ENCODE measurements at regions of chr11 and their contacts with region 1.

Region 1: DNA sequence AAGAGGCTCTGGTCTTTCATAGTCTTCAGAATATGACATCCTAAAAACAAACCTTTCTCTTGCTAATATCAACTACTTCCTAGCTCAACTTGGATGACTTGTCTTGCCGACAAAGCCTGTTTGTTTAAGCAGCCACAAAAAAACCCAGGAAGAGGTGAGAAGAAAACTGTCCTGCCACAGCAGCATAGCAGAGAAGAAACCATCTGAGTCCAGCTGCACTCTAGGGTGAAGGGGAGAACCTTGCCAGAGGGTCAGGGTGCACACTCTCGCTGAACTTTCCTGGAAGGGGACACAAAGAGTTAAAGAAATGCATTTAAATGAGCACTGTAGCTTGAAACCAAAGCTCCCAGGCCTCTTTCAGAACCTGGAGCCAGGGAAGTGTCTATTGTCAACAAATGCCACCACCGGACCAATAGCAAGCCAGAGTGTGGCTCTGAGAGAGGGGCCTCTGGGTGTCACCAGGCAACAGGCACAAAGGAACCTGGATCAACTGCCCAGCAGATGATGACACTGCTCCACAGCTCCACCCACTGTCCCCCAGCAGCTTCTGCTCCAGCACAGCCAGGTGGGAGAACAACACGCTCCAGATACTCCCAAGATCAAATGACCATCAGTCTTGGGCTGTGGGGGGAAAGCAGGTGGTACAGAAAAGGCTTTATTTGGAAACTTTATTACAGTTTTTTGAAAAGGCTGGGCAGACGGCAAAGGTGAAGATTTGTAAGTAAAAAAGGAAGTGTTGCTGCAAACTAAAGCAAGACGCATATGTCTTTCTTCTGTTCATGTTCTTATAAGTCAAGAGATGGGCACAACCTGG is 105.7 kb downstream of the RASSF10 start:
- DNase-seq: no peak
- ATAC-seq: peak; percentile 43
- H3K4me3 ChIP-seq: no peak overlapping the region
- H3K27ac ChIP-seq: no peak overlapping the region
- H3K4me1 ChIP-seq: no peaks in the 10 kb centered on the region
- H3K27me3 ChIP-seq: no peaks in the 10 kb centered on the region
- CTCF ChIP-seq: peak in 2 of 3 experiments; percentile 14 to 45; a peak in 2 of 6 replicates
- EP300 ChIP-seq: no peak
- POLR2A ChIP-seq: no peak
- RAD21 ChIP-seq: no peak

Region 2: GRCh38 chr11:13009921-13010748 is 104.6 kb before region 1 on chr11:
- CTCF ChIA-PET with region 1: interaction called, 5 read pairs
- POLR2A ChIA-PET with region 1: interaction called, 3 read pairs
- RAD21 ChIA-PET with region 1: interaction called, 5 read pairs
- SMC1A ChIA-PET with region 1: interaction called, 5 read pairs
- in situ Hi-C with region 1: no loop called
- intact Hi-C with region 1: loop called (anchors 1 kb)
- DNase-seq: no peak
- ATAC-seq: no peak
- H3K4me3 ChIP-seq: no peak overlapping the region
- H3K27ac ChIP-seq: no peak overlapping the region
- H3K4me1 ChIP-seq: no peaks in the 10 kb centered on the region
- H3K27me3 ChIP-seq: peaks cover 0 to 4% of the 10 kb centered on the region in 2 experiments; a peak in 3 of 4 replicates
- CTCF ChIP-seq: no peak; a peak in 1 of 6 replicates
- EP300 ChIP-seq: no peak
- POLR2A ChIP-seq: no peak
- RAD21 ChIP-seq: no peak

Region 3: GRCh38 chr11:13052130-13052605 is 62.6 kb before region 1 on chr11:
- CTCF ChIA-PET with region 1: interaction called, 4 read pairs
- POLR2A ChIA-PET with region 1: no interaction called
- RAD21 ChIA-PET with region 1: interaction called, 4 read pairs
- SMC1A ChIA-PET with region 1: interaction called, 6 read pairs
- in situ Hi-C with region 1: no loop called
- intact Hi-C with region 1: loop called (anchors 5 kb)
- DNase-seq: no peak
- ATAC-seq: peak; percentile 43
- H3K4me3 ChIP-seq: no peak overlapping the region
- H3K27ac ChIP-seq: no peak overlapping the region
- H3K4me1 ChIP-seq: no peaks in the 10 kb centered on the region
- H3K27me3 ChIP-seq: no peaks in the 10 kb centered on the region
- CTCF ChIP-seq: no peak
- EP300 ChIP-seq: no peak
- POLR2A ChIP-seq: no peak
- RAD21 ChIP-seq: no peak

Region 4: GRCh38 chr11:13127161-13127560 is 12.4 kb after region 1 on chr11:
- CTCF ChIA-PET with region 1: interaction called, 3 read pairs
- POLR2A ChIA-PET with region 1: no interaction called
- RAD21 ChIA-PET with region 1: no interaction called
- SMC1A ChIA-PET with region 1: interaction called, 10 read pairs
- in situ Hi-C with region 1: no loop called
- intact Hi-C with region 1: no loop called
- DNase-seq: no peak
- ATAC-seq: no peak
- H3K4me3 ChIP-seq: no peak overlapping the region
- H3K27ac ChIP-seq: no peak overlapping the region
- H3K4me1 ChIP-seq: no peaks in the 10 kb centered on the region
- H3K27me3 ChIP-seq: no peaks in the 10 kb centered on the region
- CTCF ChIP-seq: no peak
- EP300 ChIP-seq: no peak
- POLR2A ChIP-seq: no peak
- RAD21 ChIP-seq: no peak

Region 5: GRCh38 chr11:13134886-13135285 is 20.1 kb after region 1 on chr11:
- CTCF ChIA-PET with region 1: interaction called, 8 read pairs
- POLR2A ChIA-PET with region 1: interaction called, 3 read pairs
- RAD21 ChIA-PET with region 1: interaction called, 6 read pairs
- SMC1A ChIA-PET with region 1: interaction called, 21 read pairs
- in situ Hi-C with region 1: no loop called
- intact Hi-C with region 1: no loop called
- DNase-seq: no peak
- ATAC-seq: peak; percentile 53
- H3K4me3 ChIP-seq: no peak overlapping the region
- H3K27ac ChIP-seq: no peak overlapping the region
- H3K4me1 ChIP-seq: no peaks in the 10 kb centered on the region
- H3K27me3 ChIP-seq: no peaks in the 10 kb centered on the region; a peak in 1 of 4 replicates
- CTCF ChIP-seq: no peak
- EP300 ChIP-seq: no peak
- POLR2A ChIP-seq: no peak
- RAD21 ChIP-seq: no peak

Region 6: GRCh38 chr11:13140028-13140870 is 25.5 kb after region 1 on chr11:
- CTCF ChIA-PET with region 1: interaction called, 8 read pairs
- POLR2A ChIA-PET with region 1: interaction called, 3 read pairs
- RAD21 ChIA-PET with region 1: interaction called, 6 read pairs
- SMC1A ChIA-PET with region 1: interaction called, 21 read pairs
- in situ Hi-C with region 1: no loop called
- intact Hi-C with region 1: no loop called
- DNase-seq: peak; percentile 57
- ATAC-seq: peak; percentile 85
- H3K4me3 ChIP-seq: no peak overlapping the region
- H3K27ac ChIP-seq: no peak overlapping the region
- H3K4me1 ChIP-seq: no peaks in the 10 kb centered on the region
- H3K27me3 ChIP-seq: no peaks in the 10 kb centered on the region; a peak in 1 of 4 replicates
- CTCF ChIP-seq: no peak
- EP300 ChIP-seq: peak in 1 of 2 experiments; percentile 9; a peak in 1 of 4 replicates
- POLR2A ChIP-seq: no peak
- RAD21 ChIP-seq: no peak

Region 7: GRCh38 chr11:13152736-13153533 is 38.2 kb after region 1 on chr11:
- CTCF ChIA-PET with region 1: interaction called, 10 read pairs
- POLR2A ChIA-PET with region 1: interaction called, 3 read pairs
- RAD21 ChIA-PET with region 1: interaction called, 5 read pairs
- SMC1A ChIA-PET with region 1: interaction called, 19 read pairs
- in situ Hi-C with region 1: no loop called
- intact Hi-C with region 1: no loop called
- DNase-seq: no peak
- ATAC-seq: peak; percentile 50; the same call in 2 of the 3 replicates
- H3K4me3 ChIP-seq: no peak overlapping the region
- H3K27ac ChIP-seq: no peak overlapping the region
- H3K4me1 ChIP-seq: no peaks in the 10 kb centered on the region
- H3K27me3 ChIP-seq: no peaks in the 10 kb centered on the region
- CTCF ChIP-seq: peak in 1 of 3 experiments; percentile 54; a peak in 2 of 6 replicates
- EP300 ChIP-seq: no peak
- POLR2A ChIP-seq: no peak
- RAD21 ChIP-seq: no peak